ENCODE measurements at regions of chr6 and their contacts with region 1.

Region 1: GRCh38 chr6:156474507-156475120 is 302.6 kb upstream of the ARID1B start:
- DNase-seq: no peak
- ATAC-seq: no peak
- H3K4me3 ChIP-seq: no peak overlapping the region
- H3K27ac ChIP-seq: no peak overlapping the region
- H3K4me1 ChIP-seq: no peaks in the 10 kb centered on the region
- H3K27me3 ChIP-seq: no peaks in the 10 kb centered on the region
- CTCF ChIP-seq: no peak
- POLR2A ChIP-seq: no peak
- RAD21 ChIP-seq: no peak

Region 2: DNA sequence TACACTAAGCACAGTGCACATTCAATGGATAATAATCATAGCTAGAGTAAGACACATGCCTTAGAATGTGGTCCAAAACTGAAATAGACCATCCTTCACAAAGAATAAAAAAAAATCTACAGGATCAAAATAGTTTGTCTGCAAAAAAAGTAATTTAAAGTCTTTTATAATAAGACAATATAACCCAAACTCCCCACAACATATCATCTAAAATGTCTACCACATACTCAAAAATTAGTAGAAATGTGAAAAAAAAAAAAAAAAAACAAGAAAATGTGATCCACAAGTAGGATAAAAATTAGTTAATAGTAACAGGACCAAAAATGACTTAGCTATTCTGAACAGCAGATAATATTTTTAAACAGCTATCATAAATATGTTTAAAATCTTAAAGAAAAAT is 254.6 kb before region 1 on chr6:
- CTCF ChIA-PET with region 1: no interaction called
- POLR2A ChIA-PET with region 1: no interaction called
- dilution Hi-C with region 1: no loop called
- in situ Hi-C with region 1: no loop called
- intact Hi-C with region 1: loop called (anchors 10 kb)
- DNase-seq: no peak
- ATAC-seq: no peak
- H3K4me3 ChIP-seq: no peak overlapping the region
- H3K27ac ChIP-seq: no peak overlapping the region
- H3K4me1 ChIP-seq: no peaks in the 10 kb centered on the region
- H3K27me3 ChIP-seq: no peaks in the 10 kb centered on the region
- CTCF ChIP-seq: no peak
- POLR2A ChIP-seq: no peak
- RAD21 ChIP-seq: no peak

Region 3: GRCh38 chr6:156741287-156742073 is 266.9 kb after region 1 on chr6:
- CTCF ChIA-PET with region 1: no interaction called
- POLR2A ChIA-PET with region 1: no interaction called
- dilution Hi-C with region 1: no loop called
- in situ Hi-C with region 1: no loop called
- intact Hi-C with region 1: no loop called
- DNase-seq: no peak
- ATAC-seq: no peak
- H3K4me3 ChIP-seq: no peak overlapping the region
- H3K27ac ChIP-seq: no peak overlapping the region
- H3K4me1 ChIP-seq: no peaks in the 10 kb centered on the region
- H3K27me3 ChIP-seq: 0 out of 2 replicates have a peak, but pooled peaks cover 1% of the 10 kb centered on the region
- CTCF ChIP-seq: no peak
- POLR2A ChIP-seq: no peak
- RAD21 ChIP-seq: no peak

Region 4: DNA sequence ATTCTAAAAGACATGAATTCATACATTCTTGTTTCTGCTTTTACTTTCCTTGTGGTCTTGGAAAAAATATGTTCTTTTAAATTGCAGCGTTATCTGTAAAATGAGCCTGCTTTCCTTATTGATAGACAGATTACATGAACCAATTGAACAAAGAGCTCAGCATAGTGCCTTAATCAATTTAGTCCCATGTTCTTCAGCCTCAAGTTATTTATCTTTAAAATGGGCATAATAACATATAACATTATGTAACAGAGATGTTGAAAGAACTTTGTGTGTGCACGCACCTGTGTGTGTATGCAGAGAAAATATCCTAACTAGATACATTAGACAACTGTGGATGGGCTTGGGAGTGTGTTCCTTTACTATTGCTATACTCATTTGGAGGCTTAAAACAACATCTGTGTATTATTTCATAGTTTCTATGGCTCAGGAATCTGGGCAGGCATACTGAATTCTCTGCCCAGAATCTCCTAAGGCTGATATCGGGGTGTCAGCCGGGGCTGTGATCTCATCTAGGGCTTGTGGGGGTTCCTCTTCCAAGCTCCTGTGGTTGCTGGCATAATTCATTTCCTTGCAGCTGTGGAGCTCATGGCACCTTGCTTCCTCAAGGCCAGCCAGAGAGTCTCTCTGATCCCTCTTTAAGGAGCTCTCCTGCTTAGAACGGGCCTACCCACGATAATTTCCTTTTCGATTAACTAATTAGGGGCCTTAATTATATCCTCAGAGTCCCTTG is 496.7 kb after region 1 on chr6:
- CTCF ChIA-PET with region 1: no interaction called
- POLR2A ChIA-PET with region 1: no interaction called
- dilution Hi-C with region 1: no loop called
- in situ Hi-C with region 1: no loop called
- intact Hi-C with region 1: no loop called
- DNase-seq: no peak
- ATAC-seq: no peak
- H3K4me3 ChIP-seq: no peak overlapping the region
- H3K27ac ChIP-seq: no peak overlapping the region
- H3K4me1 ChIP-seq: no peaks in the 10 kb centered on the region
- H3K27me3 ChIP-seq: no peaks in the 10 kb centered on the region
- CTCF ChIP-seq: no peak
- POLR2A ChIP-seq: no peak
- RAD21 ChIP-seq: no peak

Measured in IMR-90 (cell line).